Left colon (tissue), 2 donors: ENCODE measurements at regions of chrX and their contacts with region 1.

Region 1: DNA sequence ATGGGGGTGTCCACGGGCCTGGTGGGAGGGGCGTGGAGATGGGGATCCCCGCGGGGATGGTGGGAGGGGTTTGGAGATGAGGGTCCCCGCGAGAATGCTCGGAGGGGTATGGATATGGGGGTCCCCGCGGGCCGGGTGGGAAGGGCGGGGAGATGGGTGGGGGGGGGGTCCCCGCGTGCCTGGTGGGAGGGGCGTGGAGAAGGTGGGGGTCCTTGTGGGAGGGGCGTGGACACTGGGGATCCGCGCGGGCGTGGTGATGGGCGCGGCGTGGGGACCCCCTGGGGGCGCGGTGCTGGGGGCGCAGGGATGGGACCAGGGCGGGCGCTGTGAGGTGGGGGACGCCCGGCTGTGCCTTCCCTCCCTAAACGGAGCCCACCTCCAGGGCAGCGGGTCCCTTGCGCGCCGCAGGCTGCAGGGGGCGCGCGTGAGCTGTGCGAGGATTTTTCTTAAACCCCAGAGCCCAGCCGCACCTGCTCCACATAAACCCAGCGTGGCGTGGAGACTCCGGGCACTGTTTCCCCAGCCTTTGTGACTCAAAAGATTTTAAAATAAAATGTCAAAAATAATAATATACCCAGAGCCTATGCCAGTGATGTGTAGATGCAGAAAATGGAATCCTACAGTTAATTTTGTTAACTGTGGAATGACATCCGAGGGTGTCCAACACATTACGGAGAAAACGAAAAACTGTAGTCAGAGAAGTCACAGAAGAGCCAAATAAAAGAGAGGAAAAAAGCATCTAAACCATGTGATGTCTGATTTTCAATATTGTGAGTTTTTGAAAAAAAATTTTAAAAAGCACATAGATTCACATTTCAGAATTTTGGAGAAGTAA is 1.5 kb upstream of the ASMTL start:
- DNase-seq: peak; percentile 78 to 90
- ATAC-seq: peak; percentile 40

Region 2: DNA sequence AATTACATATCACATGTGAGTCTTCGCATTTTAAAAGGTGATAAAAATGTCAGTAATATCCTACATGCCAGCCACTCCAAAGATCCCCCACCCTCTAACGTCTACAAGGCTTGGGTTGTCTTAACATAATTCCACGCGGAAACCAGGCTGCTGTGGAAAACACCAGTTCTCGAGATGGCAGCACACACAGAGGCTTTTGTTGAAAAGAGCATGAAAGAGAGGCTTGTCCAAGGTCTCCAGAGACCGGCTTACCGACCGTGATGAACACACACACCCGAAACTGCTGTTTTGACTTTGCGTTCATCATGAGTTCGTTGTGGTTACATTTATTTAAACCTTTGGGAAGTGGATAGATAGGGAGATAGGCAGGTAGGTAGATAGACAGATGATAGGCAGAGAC is 329.6 kb before region 1 on chrX:
- intact Hi-C with region 1: no loop called
- DNase-seq: no peak
- ATAC-seq: no peak

Region 3: GRCh38 chrX:1391707-1392375 is 62.3 kb before region 1 on chrX and contains the start of gene SLC25A6:
- intact Hi-C with region 1: loop called in 1 of 2 experiments (anchors 5 kb)
- DNase-seq: peak; percentile 99
- ATAC-seq: peak; percentile 87
- total RNA-seq, gene SLC25A6: 452 to 482 TPM

Region 4: DNA sequence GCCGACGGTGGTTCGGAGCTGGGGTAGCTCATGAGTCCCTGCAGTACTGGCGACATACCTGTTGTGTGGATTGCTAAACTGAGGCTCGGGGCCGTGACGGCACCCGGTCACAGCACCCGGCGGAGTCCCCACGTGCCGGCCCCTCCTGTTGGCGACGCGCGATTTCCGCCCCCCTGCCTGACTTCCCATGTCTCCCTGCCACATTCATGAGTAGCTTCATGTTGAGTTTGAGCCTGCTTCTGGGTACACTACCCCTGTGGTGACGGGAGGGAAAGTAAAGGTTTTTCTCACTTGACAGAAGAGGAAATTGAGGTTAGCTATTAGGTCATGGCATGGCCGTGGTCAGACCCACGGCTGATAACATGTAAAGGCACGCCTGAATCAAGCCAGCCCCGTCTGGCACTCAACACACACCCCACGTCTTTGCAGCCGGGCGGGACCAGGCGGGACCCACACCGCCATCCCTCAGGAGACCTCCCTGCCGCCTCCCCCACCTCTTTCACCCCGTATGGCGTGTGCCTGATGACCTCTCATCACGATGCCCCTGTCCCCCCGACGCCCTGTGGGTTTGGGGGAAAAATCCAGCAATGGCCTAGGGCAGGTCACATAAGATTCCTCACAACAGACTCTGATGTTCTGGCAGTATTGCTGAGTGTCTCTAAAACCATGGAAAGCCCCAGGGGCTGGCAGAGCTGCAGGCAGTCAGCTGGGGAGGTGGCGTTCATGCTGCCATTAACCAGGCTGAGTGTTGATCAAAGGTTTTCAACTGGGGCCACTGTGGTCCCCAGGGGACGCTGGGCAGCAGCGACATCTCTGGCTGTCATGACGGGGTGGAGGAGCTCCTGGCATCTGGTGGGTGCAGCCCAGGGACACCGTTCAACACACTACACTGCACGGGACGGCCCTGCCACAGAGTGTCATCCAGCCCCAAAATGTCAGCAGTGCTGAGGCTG is 53.6 kb after region 1 on chrX:
- intact Hi-C with region 1: no loop called
- DNase-seq: no peak
- ATAC-seq: no peak

Region 5: DNA sequence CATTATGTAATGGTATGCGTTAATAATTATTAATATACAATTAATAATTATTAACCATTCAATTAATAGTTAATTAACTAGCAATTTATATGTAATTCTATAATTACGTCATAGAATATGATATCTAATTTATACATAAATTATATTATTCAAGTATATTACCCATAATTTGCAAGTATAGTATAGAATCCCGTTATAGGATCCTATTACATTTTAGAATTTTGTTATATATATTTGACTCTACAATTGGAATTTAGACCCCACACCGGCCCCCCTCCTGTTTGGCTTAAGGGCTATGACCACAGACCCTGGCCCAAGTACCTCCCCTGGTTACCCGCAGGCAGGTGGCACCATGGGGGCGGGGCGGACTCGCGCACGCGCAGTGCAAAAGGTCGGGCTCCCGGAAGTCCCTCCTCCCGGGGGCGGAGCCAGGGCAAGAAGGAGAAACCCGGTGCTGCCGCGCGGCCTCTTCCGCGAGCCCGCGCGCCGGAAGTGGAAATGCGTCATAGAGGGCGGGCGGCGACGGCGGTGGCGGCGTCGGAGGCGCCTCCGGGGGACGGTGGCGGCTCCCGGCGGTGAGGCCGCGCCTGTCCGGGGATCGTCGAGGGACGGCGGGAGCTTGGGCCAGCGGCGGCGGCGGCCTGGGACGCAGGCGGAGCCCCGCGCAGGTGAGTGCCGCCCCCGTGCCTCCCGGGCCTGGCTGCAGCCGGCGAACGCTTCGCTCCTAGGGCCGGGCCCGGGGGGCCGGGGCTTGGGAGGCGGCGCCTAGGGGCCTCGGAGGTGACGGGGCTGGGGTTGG is 137.1 kb after region 1 on chrX and contains the start of gene AKAP17A:
- intact Hi-C with region 1: loop called in 1 of 2 experiments (anchors 10 kb)
- DNase-seq: peak; percentile 94 to 96
- ATAC-seq: peak; percentile 95
- total RNA-seq, gene AKAP17A: 37.3 to 39.0 TPM